Pancreas (tissue), 10 donors: ENCODE measurements at regions of chr9 and their contacts with region 1.

Region 1: DNA sequence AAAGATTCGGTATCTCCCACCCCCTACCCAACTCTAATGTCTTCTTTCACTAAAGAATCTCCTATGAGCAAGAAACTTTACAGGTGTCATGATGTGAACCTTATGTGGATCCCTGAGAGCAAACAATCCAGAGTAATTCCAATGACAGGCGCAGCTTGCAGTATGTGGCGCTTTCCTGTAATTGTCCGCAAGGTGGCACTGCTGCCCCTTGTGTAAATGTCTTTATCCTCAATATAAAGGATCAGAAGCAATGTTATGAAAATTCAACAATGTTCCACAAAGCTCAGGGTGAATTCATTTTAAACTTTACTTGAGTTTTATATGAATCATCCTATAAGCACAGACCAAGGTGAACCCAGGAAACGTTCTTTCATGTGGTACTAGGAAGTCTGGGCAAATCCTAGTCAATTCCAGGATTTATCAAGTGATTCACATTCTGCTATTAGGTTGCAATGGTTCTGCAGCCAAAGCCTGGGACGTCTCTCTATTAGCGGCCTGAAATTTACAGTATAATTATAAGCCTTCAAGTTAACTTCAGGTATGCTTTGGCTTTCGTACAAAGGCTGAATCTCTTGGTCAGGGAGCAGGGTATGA is 113.7 kb downstream of the TRPM6 start:
- DNase-seq: peak; percentile 50 to 83 (median 66)
- ATAC-seq: peak; percentile 71 to 95 (median 90)
- H3K4me3 ChIP-seq: no peak overlapping the region
- H3K27ac ChIP-seq: no peak overlapping the region
- H3K4me1 ChIP-seq: no peaks in the 10 kb centered on the region
- H3K27me3 ChIP-seq: no peaks in the 10 kb centered on the region
- CTCF ChIP-seq: peak; percentile 80 to 85 (median 83)

Region 2: DNA sequence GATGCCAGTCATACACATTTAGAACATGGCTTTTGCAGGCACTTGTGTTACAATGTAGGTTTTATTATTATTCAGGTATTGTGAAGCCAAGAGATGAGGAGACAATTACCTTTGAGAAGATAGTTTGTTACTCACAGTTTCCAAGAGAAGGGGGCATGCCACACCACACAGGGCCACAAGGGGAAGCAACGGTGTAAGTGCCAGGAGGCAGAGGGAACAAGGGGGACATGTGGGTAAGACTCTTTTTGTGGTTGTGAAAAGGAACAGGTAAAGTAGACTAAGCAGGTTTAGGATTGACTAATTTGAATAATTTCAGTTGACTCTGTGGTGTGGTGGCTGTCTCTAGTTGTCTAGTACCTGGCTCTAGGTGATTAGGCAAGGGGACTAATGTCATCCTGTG is 77.5 kb before region 1 on chr9:
- intact Hi-C with region 1: no loop called
- DNase-seq: no peak
- ATAC-seq: no peak
- H3K4me3 ChIP-seq: no peak overlapping the region
- H3K27ac ChIP-seq: no peak overlapping the region
- H3K4me1 ChIP-seq: no peaks in the 10 kb centered on the region
- H3K27me3 ChIP-seq: no peaks in the 10 kb centered on the region
- CTCF ChIP-seq: no peak

Region 3: DNA sequence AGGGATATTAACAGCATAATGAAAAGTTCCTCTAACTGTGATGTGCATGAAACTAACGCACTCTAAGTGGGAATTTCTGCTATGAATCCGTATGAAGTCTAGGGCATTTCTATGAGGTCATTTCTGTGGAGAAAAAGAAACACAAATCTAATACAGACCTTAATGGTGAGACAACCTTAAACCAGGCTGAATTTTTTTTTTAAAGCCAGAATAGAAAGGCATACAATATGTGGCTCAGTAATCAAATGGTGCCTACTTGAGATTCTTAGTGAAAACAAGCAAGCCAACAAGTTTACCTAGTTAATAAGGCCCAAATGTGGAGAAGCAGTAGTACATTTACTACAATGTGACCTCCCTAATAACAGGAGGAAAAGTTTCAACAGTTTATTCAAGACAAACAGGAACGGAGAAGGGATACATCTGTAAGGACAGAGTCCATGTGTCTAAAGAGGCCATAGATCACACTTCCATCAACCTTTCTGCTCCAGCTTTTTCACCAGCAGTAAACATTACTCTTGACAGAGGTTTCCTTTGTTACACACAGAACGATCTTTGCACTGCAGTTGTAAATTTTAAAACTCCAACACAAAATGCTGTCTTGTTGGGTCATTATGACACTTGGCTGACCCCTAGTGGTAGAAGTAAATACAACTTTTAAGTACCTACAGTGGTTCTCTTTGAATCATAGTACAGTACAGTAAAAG is 227.9 kb after region 1 on chr9:
- intact Hi-C with region 1: loop called in 2 of 3 experiments (anchors 5 kb)
- DNase-seq: peak in 1 of 6 donors; percentile 15
- ATAC-seq: peak; percentile 91 to 99 (median 97)
- H3K4me3 ChIP-seq: no peak overlapping the region
- H3K27ac ChIP-seq: no peak overlapping the region
- H3K4me1 ChIP-seq: no peaks in the 10 kb centered on the region
- H3K27me3 ChIP-seq: no peaks in the 10 kb centered on the region
- CTCF ChIP-seq: peak; percentile 41 to 74 (median 68)

Region 4: DNA sequence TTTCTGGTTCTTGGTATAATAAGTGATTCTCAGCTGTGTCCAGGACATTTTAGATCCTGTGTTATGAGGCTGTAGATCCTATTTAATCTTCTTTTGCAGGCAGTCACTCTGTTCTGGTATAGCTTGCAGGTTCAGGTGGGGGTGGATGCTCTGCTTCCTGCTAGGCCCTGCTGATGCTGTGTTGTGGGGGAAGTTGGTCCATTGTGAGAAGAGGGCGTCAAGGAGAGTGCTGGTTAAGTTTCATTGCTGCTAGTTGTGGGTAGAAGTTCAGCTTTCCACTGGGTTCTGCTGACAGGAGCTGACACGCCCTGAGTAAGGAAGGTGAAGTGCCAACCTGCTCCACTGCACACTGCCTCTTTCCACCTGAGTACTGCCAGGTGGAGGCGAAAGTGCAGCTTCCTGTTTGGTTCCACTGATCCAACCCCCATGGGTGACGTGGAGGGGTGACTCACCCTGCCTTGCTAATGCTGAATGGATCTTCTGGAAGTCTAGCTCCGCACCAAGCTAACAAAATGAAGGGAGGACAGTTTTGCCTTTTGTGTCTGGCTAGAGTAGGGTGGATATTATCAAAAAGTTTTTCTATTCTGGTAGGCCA is 297.6 kb after region 1 on chr9:
- intact Hi-C with region 1: loop called in 1 of 3 experiments (anchors 10 kb)
- DNase-seq: no peak
- ATAC-seq: peak in 2 of 4 donors; percentile 60 to 70
- H3K4me3 ChIP-seq: no peak overlapping the region
- H3K27ac ChIP-seq: no peak overlapping the region
- H3K4me1 ChIP-seq: no peaks in the 10 kb centered on the region
- H3K27me3 ChIP-seq: no peaks in the 10 kb centered on the region
- CTCF ChIP-seq: no peak

Region 5: DNA sequence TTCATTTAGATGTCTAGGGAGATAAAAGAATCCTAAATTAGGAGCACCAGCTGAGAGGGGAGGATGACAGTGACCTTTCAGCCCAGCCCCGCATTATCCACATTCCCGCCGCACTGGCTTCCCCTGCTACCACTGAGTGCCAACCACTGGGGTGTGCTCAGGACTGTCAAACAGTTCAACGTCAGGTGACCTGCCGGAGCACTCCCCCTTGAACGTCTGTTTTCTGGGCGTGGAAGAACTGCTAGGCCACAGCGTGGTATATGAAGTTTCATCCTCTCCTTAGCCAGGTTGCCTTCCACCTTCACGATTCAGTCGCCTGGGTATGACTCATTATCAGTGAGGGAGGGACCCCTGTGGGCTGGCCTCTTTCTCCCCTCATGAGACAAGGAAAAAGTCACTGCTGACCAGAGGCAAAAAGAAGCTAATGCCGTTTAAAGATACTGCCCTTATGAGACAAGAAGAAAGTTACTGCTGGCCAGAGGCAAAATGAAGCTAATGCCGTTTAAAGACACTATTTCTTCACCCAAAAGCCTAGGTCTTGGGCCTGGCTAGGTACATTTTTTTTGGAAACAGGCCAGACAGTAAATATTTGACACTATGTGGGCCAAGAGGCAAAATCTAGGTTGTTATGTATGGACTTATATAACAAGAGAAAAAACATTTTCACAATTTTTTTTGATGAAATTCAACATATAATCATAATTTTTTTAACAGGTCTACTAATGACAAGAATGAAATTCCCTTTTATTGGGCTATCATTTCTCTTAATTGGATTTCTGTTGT is 309.4 kb after region 1 on chr9:
- intact Hi-C with region 1: loop called in 2 of 3 experiments (anchors 5 to 10 kb)
- DNase-seq: peak in 4 of 6 donors; percentile 44 to 64 (median 50)
- ATAC-seq: peak in 3 of 4 donors; percentile 25 to 40 (median 33)
- H3K4me3 ChIP-seq: no peak overlapping the region
- H3K27ac ChIP-seq: peak overlapping the region in 3 of 4 donors; percentile 40 to 66 (median 57)
- H3K4me1 ChIP-seq: peaks cover 20 to 26% (median 25%) of the 10 kb centered on the region in 3 donors
- H3K27me3 ChIP-seq: no peaks in the 10 kb centered on the region
- CTCF ChIP-seq: no peak